PC-3 (cell line): ENCODE measurements at regions of chr18 and their contacts with region 1.

Region 1: GRCh38 chr18:56233595-56233994 is 404.8 kb downstream of the TXNL1 start:
- DNase-seq: peak; percentile 76
- ATAC-seq: peak; percentile 80
- H3K4me3 ChIP-seq: no peak overlapping the region
- H3K27ac ChIP-seq: peak overlapping the region; percentile 48
- H3K4me1 ChIP-seq: peaks cover 9% of the 10 kb centered on the region
- H3K27me3 ChIP-seq: no peaks in the 10 kb centered on the region
- CTCF ChIP-seq: no peak

Region 2: DNA sequence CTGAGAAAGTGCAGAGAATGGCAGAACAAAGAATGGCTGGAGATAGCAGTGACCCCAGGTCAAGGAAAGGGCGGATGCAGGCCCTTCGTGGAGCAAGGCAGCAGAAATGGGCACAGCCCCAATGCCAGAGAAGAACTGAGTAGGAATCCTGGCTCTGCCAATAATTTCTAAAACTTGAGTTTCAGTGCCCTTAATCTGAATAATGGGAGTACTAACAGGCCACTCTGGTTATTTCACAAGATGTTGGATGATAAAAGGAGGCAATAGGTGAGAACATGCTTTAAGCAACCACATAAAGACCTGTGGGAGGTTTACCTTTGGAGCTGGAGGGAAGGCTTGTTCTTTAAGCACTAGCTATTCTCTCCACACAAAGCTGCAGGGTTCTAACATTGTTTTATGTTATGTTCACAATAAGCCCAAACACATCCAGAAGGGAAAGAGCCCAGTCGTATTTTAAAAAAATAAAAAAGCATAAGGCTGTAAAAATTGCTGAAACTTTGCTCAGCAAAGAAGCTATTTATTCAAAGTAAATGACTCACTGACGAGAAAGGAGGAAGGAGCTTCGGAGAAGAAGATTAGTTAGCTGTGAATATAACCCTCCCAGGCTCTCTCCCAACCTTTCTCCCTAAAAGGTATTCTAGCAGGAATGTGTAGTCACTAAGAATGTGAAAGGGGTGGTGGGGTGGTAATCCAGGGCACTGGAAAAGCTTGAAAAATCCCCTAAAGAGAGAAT is 65.4 kb before region 1 on chr18:
- CTCF ChIA-PET with region 1: no interaction called
- POLR2A ChIA-PET with region 1: no interaction called
- intact Hi-C with region 1: loop called (anchors 5 kb)
- DNase-seq: peak; percentile 92
- ATAC-seq: peak; percentile 93
- H3K4me3 ChIP-seq: peak overlapping the region; percentile 39; the same call in 1 of the 2 replicates
- H3K27ac ChIP-seq: peak overlapping the region; percentile 93
- H3K4me1 ChIP-seq: peaks cover 40% of the 10 kb centered on the region
- H3K27me3 ChIP-seq: no peaks in the 10 kb centered on the region
- CTCF ChIP-seq: no peak